MCF 10A (cell line): ENCODE measurements at regions of chr4 and their contacts with region 1.

Region 1: GRCh38 chr4:186037692-186038658 is 31.0 kb upstream of the TLR3 start:
- DNase-seq: peak; percentile 79
- H3K4me3 Mint-ChIP-seq: no peak overlapping the region
- H3K27ac Mint-ChIP-seq: no peak overlapping the region
- H3K4me1 Mint-ChIP-seq: no peaks in the 10 kb centered on the region
- H3K27me3 Mint-ChIP-seq: no peaks in the 10 kb centered on the region
- CTCF ChIP-seq: peak; percentile 75

Region 2: DNA sequence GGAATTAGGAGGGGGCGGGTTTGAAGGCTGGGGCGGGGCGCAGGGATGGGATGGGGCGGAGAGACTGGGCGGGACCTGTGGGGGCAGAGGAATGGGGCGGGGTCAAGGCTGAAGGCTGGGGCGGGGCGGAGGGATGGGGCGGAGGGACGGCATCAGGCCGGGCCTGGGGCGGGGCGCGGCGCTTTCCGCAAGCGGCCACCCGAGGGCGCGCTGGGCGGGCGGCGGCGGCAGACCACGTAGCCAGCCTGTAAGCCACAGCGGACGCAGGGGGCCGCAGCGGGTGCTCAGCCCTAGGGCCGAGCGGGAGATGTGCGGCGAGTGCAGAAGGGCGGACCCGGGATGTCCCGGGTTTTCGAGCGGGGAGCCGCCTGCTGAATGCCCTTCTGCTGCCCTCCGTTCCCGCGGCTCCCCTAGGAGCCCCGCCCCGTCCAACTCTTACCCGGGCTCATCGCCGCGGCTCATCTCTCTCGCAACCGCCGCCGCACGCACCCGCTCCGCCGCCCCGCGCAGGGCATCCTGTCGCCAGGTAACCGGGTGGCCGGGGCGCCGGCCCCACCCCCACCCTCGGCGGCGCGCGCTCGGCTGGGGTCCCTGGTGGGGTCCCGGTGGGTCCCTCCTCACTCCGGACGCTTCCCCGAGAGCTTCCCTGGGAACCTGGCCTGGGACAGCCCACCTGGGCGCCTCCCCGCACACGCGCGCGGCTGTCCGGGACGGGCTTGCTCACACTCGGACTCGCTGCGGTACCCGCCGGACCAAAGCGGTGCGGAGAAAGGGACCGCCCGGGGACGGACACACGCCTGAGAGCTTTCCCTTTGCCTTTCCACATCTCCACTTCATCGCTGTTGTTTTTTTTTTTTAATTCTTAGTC is 566.5 kb before region 1 on chr4 and contains the start of gene CCDC110:
- CTCF ChIA-PET with region 1: interaction called, 4 read pairs
- POLR2A ChIA-PET with region 1: no interaction called
- intact Hi-C with region 1: loop called (anchors 5 kb)
- DNase-seq: peak; percentile 92
- H3K4me3 Mint-ChIP-seq: peak within 1 kb of the TSS; percentile 80
- H3K27ac Mint-ChIP-seq: no peak within 1 kb of the TSS
- H3K4me1 Mint-ChIP-seq: no peaks in the 10 kb centered on the region
- H3K27me3 Mint-ChIP-seq: peaks cover 43% of the 10 kb centered on the region
- CTCF ChIP-seq: peak; percentile 66
- total RNA-seq, gene CCDC110: 0.47 TPM in 1 of 2 replicates, not detected in the other

Region 3: DNA sequence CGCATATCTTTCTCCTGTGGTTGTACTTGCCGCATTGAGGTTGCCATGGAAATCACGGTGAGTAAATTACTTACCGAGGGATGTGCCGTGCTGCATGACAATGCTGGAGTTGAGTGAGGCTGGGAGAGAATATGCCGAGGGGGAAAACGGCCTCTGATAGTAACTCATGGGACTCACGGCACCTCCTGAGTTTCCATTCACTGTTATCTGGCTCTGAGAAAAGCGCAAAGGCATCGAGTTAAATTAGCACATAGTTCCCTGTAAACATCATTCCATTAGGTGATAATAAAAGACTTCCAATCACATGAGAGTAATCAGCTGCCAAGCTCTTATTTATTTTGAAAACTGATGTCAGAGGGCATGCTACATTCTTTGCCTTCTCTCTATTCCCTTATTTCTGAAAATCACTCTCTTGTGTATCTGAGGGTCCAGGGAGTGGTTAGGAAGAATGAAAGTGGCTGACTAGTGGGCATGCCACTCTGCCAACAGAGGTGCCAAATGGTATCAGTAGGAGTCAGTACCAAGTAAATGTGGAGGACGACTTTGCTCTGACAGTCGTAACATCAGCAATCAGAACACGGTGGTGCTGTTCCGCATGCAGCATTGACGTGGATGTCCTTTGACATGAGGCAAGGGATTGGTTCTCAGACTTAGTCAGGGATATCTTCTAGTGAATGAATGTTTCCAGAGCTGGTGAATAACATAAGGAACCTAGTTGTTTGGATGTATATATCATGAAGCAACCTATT is 375.8 kb before region 1 on chr4:
- CTCF ChIA-PET with region 1: interaction called, 10 read pairs
- POLR2A ChIA-PET with region 1: no interaction called
- intact Hi-C with region 1: no loop called
- DNase-seq: no peak
- H3K4me3 Mint-ChIP-seq: no peak overlapping the region
- H3K27ac Mint-ChIP-seq: no peak overlapping the region
- H3K4me1 Mint-ChIP-seq: no peaks in the 10 kb centered on the region
- H3K27me3 Mint-ChIP-seq: no peaks in the 10 kb centered on the region
- CTCF ChIP-seq: no peak

Region 4: GRCh38 chr4:185689407-185689806 is 348.6 kb before region 1 on chr4:
- CTCF ChIA-PET with region 1: no interaction called
- POLR2A ChIA-PET with region 1: no interaction called
- intact Hi-C with region 1: no loop called
- DNase-seq: no peak
- H3K4me3 Mint-ChIP-seq: no peak overlapping the region
- H3K27ac Mint-ChIP-seq: no peak overlapping the region
- H3K4me1 Mint-ChIP-seq: no peaks in the 10 kb centered on the region
- H3K27me3 Mint-ChIP-seq: no peaks in the 10 kb centered on the region
- CTCF ChIP-seq: no peak

Region 5: GRCh38 chr4:185874516-185875230 is 163.3 kb before region 1 on chr4:
- CTCF ChIA-PET with region 1: no interaction called
- POLR2A ChIA-PET with region 1: no interaction called
- intact Hi-C with region 1: no loop called
- DNase-seq: peak; percentile 67
- H3K4me3 Mint-ChIP-seq: no peak overlapping the region
- H3K27ac Mint-ChIP-seq: peak overlapping the region; percentile 40
- H3K4me1 Mint-ChIP-seq: peaks cover 24% of the 10 kb centered on the region
- H3K27me3 Mint-ChIP-seq: no peaks in the 10 kb centered on the region
- CTCF ChIP-seq: no peak

Region 6: DNA sequence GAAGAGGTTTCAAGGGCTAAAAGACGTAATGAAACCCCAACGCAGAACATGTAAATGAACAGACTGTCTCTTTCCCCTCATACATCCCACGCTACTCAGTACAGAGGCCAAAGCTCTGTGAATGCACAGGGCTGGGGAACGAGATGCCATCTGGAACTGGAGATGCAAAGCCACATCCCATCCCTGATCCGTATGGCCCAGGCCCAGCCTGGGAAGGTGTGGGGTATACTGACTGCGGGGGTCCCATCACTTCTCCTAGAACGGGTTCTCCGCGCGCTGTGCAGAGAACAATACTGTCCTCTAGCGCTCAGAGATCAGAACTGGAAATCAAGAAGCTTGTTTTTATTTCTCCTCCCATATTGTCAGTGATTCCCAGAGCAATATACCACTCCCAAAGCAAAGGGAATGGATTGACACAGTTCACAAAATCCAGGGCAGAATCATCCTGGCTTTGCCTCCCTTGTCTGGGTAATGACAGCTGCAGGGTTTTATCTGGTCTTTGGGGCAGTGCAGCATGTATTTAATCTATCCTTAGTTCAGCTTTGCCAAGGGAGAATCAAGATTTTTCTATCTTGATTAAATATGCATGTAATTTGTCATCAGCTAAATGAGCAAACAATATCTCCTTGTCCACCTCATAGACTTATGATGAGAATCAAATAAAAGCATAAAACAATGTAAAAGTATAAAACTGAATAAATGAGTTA is 16.4 kb before region 1 on chr4:
- CTCF ChIA-PET with region 1: interaction called, 11 read pairs
- POLR2A ChIA-PET with region 1: no interaction called
- intact Hi-C with region 1: no loop called
- DNase-seq: peak; percentile 31
- H3K4me3 Mint-ChIP-seq: no peak overlapping the region
- H3K27ac Mint-ChIP-seq: no peak overlapping the region
- H3K4me1 Mint-ChIP-seq: no peaks in the 10 kb centered on the region
- H3K27me3 Mint-ChIP-seq: no peaks in the 10 kb centered on the region
- CTCF ChIP-seq: peak; percentile 55

Region 7: DNA sequence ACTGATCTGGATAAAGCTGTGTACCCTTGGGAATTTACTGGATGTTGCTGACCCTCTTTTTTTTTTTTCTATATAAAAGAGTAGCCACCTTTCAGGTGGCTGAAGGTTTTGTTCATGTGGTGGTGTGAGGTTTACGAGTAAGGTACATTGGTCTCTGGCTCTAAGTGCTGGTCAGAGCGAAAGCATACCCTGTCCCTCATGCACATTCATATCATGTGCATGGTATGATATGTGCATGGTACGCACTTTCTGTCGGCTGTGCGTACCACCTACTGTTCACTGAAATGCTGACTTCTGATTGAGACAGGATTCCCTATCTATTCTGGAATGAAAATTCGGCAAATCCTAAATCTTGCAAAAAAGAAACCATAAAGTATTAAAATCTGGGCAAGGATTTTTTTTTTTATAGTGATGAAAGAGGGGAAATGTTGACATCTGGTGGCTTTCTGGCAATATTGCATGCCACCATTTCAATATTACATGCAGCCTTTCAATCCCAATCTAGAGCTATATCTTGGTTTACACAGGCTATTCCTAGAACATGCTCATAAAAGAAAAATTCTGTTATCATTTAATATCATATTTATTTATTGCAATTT is 99.3 kb after region 1 on chr4:
- CTCF ChIA-PET with region 1: interaction called, 15 read pairs
- POLR2A ChIA-PET with region 1: no interaction called
- intact Hi-C with region 1: no loop called
- DNase-seq: peak; percentile 34
- H3K4me3 Mint-ChIP-seq: no peak overlapping the region
- H3K27ac Mint-ChIP-seq: no peak overlapping the region
- H3K4me1 Mint-ChIP-seq: no peaks in the 10 kb centered on the region
- H3K27me3 Mint-ChIP-seq: no peaks in the 10 kb centered on the region
- CTCF ChIP-seq: peak; percentile 60

Region 8: GRCh38 chr4:186260117-186260503 is 222.1 kb after region 1 on chr4:
- CTCF ChIA-PET with region 1: no interaction called
- POLR2A ChIA-PET with region 1: no interaction called
- intact Hi-C with region 1: no loop called
- DNase-seq: no peak
- H3K4me3 Mint-ChIP-seq: no peak overlapping the region
- H3K27ac Mint-ChIP-seq: no peak overlapping the region
- H3K4me1 Mint-ChIP-seq: peaks cover 5% of the 10 kb centered on the region
- H3K27me3 Mint-ChIP-seq: no peaks in the 10 kb centered on the region
- CTCF ChIP-seq: no peak

Region 9: GRCh38 chr4:186318481-186318880 is 280.5 kb after region 1 on chr4:
- CTCF ChIA-PET with region 1: no interaction called
- POLR2A ChIA-PET with region 1: no interaction called
- intact Hi-C with region 1: no loop called
- DNase-seq: no peak
- H3K4me3 Mint-ChIP-seq: no peak overlapping the region
- H3K27ac Mint-ChIP-seq: no peak overlapping the region
- H3K4me1 Mint-ChIP-seq: no peaks in the 10 kb centered on the region
- H3K27me3 Mint-ChIP-seq: peaks cover 22% of the 10 kb centered on the region
- CTCF ChIP-seq: no peak